ENCODE measurements at regions of chrX and their contacts with region 1.

Region 1: GRCh38 chrX:101390664-101391525 is at the start of gene RPL36A:
- DNase-seq: peak; percentile 60 to 90
- ATAC-seq: peak; percentile 94 to 97 (median 96)
- H3K4me3 ChIP-seq: peak within 1 kb of the TSS; percentile 74
- H3K4me3 Mint-ChIP-seq: peak within 1 kb of the TSS; percentile 91
- H3K27ac ChIP-seq: peak within 1 kb of the TSS; percentile 89
- H3K27ac Mint-ChIP-seq: peak within 1 kb of the TSS; percentile 87 to 89
- H3K4me1 ChIP-seq: peaks cover 12% of the 10 kb centered on the region
- H3K4me1 Mint-ChIP-seq: peaks cover 8 to 14% of the 10 kb centered on the region in 2 donors
- H3K27me3 ChIP-seq: no peaks in the 10 kb centered on the region
- H3K27me3 Mint-ChIP-seq: no peaks in the 10 kb centered on the region
- CTCF ChIP-seq: peak; percentile 57
- total RNA-seq, gene RPL36A: 88.0 to 108 (median 91.5) TPM

Region 2: GRCh38 chrX:101348452-101349192 is 42.3 kb before region 1 on chrX and contains the start of gene TIMM8A:
- intact Hi-C with region 1: loop called (anchors 2 kb)
- DNase-seq: peak; percentile 66 to 85
- ATAC-seq: peak; percentile 98 to 99 (median 99)
- H3K4me3 ChIP-seq: peak within 1 kb of the TSS; percentile 97
- H3K4me3 Mint-ChIP-seq: peak within 1 kb of the TSS; percentile 87
- H3K27ac ChIP-seq: peak within 1 kb of the TSS; percentile 84
- H3K27ac Mint-ChIP-seq: peak within 1 kb of the TSS; percentile 71 to 89
- H3K4me1 ChIP-seq: peaks cover 13% of the 10 kb centered on the region
- H3K4me1 Mint-ChIP-seq: peaks cover 0 to 10% of the 10 kb centered on the region in 2 donors
- H3K27me3 ChIP-seq: no peaks in the 10 kb centered on the region
- H3K27me3 Mint-ChIP-seq: no peaks in the 10 kb centered on the region
- CTCF ChIP-seq: no peak
- total RNA-seq, gene TIMM8A: 6.0 to 7.4 (median 7.0) TPM

Region 3: DNA sequence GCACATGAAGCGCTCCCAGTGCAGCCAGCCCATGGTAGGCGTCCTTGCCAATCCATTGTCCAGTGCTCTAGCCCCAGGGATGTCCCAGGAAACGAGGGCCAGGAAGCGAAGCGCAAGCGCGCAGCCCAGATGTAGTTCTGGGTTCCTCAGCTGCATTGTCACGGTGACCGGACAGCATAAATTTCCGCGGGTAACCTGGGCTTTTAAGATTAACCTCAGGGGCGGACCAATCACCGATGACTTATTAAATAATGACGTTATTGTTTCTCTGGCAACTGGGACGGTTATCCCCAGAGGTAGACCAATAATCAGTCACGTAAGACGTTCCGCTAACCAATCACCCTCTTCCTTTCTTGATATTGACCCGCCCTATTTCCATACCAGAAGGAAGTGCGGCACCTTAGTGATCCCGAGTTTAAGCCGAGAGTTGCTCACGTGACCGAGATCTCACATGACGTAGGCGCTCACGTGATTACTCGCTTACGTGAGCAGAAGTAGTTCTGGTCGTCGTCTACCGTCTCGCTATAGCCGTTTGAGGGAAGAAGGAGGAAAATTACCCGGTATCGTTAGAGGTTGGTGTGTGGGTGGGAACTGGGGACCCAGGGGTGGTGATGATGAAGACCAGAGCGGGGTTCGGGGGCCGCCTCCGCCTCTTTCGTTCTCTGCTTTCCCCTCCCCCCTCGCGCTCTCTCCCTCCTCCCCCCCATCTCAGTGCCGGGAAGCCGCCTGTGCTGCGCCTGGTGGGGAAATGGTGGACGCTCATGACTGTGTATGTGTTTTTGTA is 17.0 kb after region 1 on chrX and contains the starts of genes GLA and HNRNPH2:
- intact Hi-C with region 1: loop called (anchors 2 kb)
- DNase-seq: peak; percentile 82 to 97
- ATAC-seq: peak; percentile 86 to 97 (median 90)
- H3K4me3 ChIP-seq: peak within 1 kb of the TSS; percentile 84
- H3K4me3 Mint-ChIP-seq: peak within 1 kb of the TSS; percentile 94
- H3K27ac ChIP-seq: peak within 1 kb of the TSS; percentile 98
- H3K27ac Mint-ChIP-seq: peak within 1 kb of the TSS; percentile 95 to 96
- H3K4me1 ChIP-seq: peaks cover 19% of the 10 kb centered on the region
- H3K4me1 Mint-ChIP-seq: peaks cover 22 to 33% of the 10 kb centered on the region in 2 donors
- H3K27me3 ChIP-seq: no peaks in the 10 kb centered on the region
- H3K27me3 Mint-ChIP-seq: no peaks in the 10 kb centered on the region
- CTCF ChIP-seq: no peak
- total RNA-seq, gene GLA: 34.9 to 71.9 (median 47.9) TPM
- total RNA-seq, gene HNRNPH2: 47.3 to 56.1 (median 52.9) TPM

Measured in natural killer cell (primary cell).